CD14-positive monocyte (primary cell): ENCODE measurements at regions of chr1 and their contacts with region 1.

Region 1: GRCh38 chr1:41361754-41362720 is 803 bp downstream of the FOXO6 start:
- DNase-seq: peak in 2 of 3 donors; percentile 26 to 33
- H3K4me3 ChIP-seq: peak overlapping the region in 2 of 3 experiments; percentile 21 to 72
- H3K4me3 Mint-ChIP-seq: peak overlapping the region; percentile 56 to 66
- H3K27ac ChIP-seq: no peak overlapping the region
- H3K27ac Mint-ChIP-seq: peak overlapping the region in 1 of 7 donors; percentile 77
- H3K4me1 ChIP-seq: peaks cover 18 to 41% of the 10 kb centered on the region in 2 donors
- H3K4me1 Mint-ChIP-seq: peaks cover 24% of the 10 kb centered on the region
- H3K27me3 ChIP-seq: peaks cover 33 to 61% of the 10 kb centered on the region in 2 donors
- H3K27me3 Mint-ChIP-seq: peaks cover 59 to 71% (median 71%) of the 10 kb centered on the region in 3 donors
- CTCF ChIP-seq: no peak

Region 2: GRCh38 chr1:41381692-41382477 is 19.8 kb after region 1 on chr1:
- intact Hi-C with region 1: loop called in 1 of 2 experiments (anchors 2 kb)
- DNase-seq: no peak
- H3K4me3 ChIP-seq: peak overlapping the region in 2 of 3 experiments; percentile 9 to 68
- H3K4me3 Mint-ChIP-seq: peak overlapping the region; percentile 76 to 94
- H3K27ac ChIP-seq: no peak overlapping the region
- H3K27ac Mint-ChIP-seq: peak overlapping the region in 1 of 7 donors; percentile 63
- H3K4me1 ChIP-seq: peaks cover 14 to 31% of the 10 kb centered on the region in 2 donors
- H3K4me1 Mint-ChIP-seq: peaks cover 30% of the 10 kb centered on the region
- H3K27me3 ChIP-seq: peaks cover 47 to 68% of the 10 kb centered on the region in 2 donors
- H3K27me3 Mint-ChIP-seq: peaks cover 54 to 73% (median 66%) of the 10 kb centered on the region in 3 donors
- CTCF ChIP-seq: no peak